ENCODE measurements at regions of chr12 and their contacts with region 1.

Region 1: DNA sequence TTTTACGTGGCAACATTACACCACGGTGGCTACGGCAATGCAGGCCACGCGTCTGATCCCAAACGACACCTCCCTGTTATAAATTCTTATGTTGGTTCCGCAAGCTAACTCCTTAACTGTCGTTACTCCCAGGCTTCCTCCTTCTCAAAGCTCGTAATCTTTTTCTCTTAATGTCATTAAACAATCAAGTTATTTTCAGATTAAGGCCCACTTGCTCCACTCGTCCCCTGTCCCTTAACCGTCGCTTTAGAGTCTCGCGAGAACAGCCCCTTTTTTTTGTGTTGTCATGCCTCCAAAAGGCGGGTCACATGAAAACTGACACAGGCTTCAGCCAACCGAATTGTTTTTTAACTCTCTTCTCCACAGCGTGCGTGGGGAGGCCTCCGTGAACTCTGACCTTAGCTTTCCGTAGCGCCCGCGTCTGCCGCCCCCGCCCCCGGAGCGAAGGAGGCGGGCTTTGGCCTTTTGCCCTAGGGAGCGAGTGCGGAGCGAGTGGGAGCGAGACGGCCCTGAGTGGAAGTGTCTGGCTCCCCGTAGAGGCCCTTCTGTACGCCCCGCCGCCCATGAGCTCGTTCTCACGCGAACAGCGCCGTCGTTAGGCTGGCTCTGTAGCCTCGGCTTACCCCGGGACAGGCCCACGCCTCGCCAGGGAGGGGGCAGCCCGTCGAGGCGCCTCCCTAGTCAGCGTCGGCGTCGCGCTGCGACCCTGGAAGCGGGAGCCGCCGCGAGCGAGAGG is at the start of gene CAND1:
- DNase-seq: peak; percentile 95
- ATAC-seq: peak; percentile 79
- H3K4me3 Mint-ChIP-seq: peak within 1 kb of the TSS; percentile 92
- H3K27ac Mint-ChIP-seq: peak within 1 kb of the TSS; percentile 99
- H3K4me1 Mint-ChIP-seq: peaks cover 44% of the 10 kb centered on the region
- H3K27me3 Mint-ChIP-seq: no peaks in the 10 kb centered on the region
- CTCF ChIP-seq: no peak
- total RNA-seq, gene CAND1: 123 and 125 TPM in 2 replicates

Region 2: GRCh38 chr12:66130277-66131066 is 1138.6 kb before region 1 on chr12 and contains the start of gene LLPH:
- CTCF ChIA-PET with region 1: no interaction called
- POLR2A ChIA-PET with region 1: interaction called, 9 read pairs
- intact Hi-C with region 1: loop called (anchors 2 kb)
- DNase-seq: peak; percentile 78
- ATAC-seq: peak; percentile 94
- H3K4me3 Mint-ChIP-seq: peak within 1 kb of the TSS; percentile 99
- H3K27ac Mint-ChIP-seq: peak within 1 kb of the TSS; percentile 96
- H3K4me1 Mint-ChIP-seq: peaks cover 43% of the 10 kb centered on the region
- H3K27me3 Mint-ChIP-seq: no peaks in the 10 kb centered on the region
- CTCF ChIP-seq: no peak
- total RNA-seq, gene LLPH: 29.5 and 35.5 TPM in 2 replicates

Region 3: DNA sequence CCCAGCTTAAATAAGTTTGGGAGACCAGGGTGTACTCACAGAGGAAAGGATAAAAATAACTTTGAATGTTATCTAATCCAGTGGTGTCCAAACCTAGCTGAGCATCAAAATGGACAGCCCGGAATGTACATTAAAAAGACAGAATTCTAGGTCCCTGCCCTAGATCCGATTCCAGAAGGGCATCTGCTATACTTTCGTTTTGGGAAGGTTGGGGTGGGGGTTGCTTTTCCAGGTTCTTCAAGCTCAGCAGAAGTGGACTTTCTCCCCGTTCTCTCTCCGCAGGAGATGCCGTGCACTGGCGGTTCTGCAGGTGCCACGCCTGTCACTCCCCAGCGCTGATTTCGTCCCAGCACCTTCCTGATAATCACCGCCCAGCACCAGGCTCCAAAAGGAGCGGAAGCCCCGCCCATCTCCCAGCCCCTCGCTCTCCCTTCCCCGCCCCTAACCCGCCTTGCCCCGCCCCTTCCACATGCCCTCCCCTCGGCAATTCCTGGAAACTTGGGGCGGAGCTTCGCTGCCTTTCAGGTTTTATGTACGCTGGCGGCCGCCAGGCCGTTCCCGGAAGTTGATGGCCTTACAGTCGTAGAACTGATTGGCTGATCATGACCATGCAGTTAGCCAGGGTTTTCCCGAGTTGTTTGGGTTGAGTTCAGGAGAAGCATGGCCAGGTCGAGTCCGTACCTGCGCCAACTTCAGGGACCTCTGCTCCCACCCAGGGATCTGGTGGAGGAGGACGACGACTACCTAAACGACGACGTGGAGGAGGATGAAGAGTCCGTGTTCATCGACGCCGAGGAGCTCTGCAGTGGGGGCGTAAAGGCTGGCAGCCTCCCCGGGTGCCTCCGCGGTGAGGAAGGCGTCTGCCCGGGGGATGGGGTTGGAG is 966.9 kb before region 1 on chr12 and contains the start of gene HELB:
- CTCF ChIA-PET with region 1: no interaction called
- POLR2A ChIA-PET with region 1: interaction called, 7 read pairs
- intact Hi-C with region 1: loop called (anchors 1 kb)
- DNase-seq: peak; percentile 80
- ATAC-seq: peak; percentile 95
- H3K4me3 Mint-ChIP-seq: peak within 1 kb of the TSS; percentile 99
- H3K27ac Mint-ChIP-seq: peak within 1 kb of the TSS; percentile 86
- H3K4me1 Mint-ChIP-seq: peaks cover 41% of the 10 kb centered on the region
- H3K27me3 Mint-ChIP-seq: peaks cover 1% of the 10 kb centered on the region
- CTCF ChIP-seq: no peak
- total RNA-seq, gene HELB: 4.7 and 7.2 TPM in 2 replicates

Region 4: DNA sequence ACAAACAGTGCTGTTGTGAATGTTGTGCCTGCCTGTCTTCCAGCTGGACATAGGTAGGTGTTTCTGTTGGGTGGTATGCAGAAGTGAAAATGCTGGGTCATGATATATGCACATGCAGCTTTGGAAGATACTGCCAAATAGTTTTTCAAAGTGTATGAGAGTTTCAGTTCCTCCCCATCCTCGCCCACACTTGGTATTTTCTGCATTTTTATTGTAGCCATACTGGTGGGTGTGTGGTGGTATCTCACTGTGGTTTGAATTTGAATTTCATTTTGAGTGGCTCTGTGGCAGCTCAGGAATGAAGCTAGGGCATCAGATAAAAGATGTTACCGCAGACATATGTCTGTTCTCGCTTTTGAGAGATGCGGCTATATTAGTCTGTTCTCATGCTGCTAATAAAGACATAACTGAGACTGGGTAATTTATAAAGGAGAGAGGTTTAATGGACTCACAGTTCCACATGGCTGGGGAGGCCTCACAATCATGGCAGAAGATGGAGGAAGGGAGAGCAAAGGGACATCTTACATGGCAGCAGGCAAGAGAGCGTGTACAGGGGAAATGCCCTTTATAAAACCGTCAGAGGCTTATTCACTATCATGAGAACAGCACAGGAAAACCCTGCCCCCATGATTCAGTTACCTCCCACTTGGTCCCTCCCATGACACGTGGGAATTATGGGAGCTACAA is 183.2 kb after region 1 on chr12:
- CTCF ChIA-PET with region 1: interaction called, 3 read pairs
- POLR2A ChIA-PET with region 1: interaction called, 12 read pairs
- intact Hi-C with region 1: loop called (anchors 1 kb)
- DNase-seq: no peak
- ATAC-seq: peak; percentile 60
- H3K4me3 Mint-ChIP-seq: peak overlapping the region; percentile 17
- H3K27ac Mint-ChIP-seq: peak overlapping the region; percentile 54
- H3K4me1 Mint-ChIP-seq: peaks cover 40% of the 10 kb centered on the region
- H3K27me3 Mint-ChIP-seq: peaks cover 12% of the 10 kb centered on the region
- CTCF ChIP-seq: no peak

Region 5: GRCh38 chr12:67698672-67699581 is 429.9 kb after region 1 on chr12:
- CTCF ChIA-PET with region 1: no interaction called
- POLR2A ChIA-PET with region 1: interaction called, 4 read pairs
- intact Hi-C with region 1: loop called (anchors 1 kb)
- DNase-seq: no peak
- ATAC-seq: peak; percentile 87
- H3K4me3 Mint-ChIP-seq: peak overlapping the region; percentile 74
- H3K27ac Mint-ChIP-seq: peak overlapping the region; percentile 86
- H3K4me1 Mint-ChIP-seq: peaks cover 43% of the 10 kb centered on the region
- H3K27me3 Mint-ChIP-seq: peaks cover 4% of the 10 kb centered on the region
- CTCF ChIP-seq: no peak

Region 6: DNA sequence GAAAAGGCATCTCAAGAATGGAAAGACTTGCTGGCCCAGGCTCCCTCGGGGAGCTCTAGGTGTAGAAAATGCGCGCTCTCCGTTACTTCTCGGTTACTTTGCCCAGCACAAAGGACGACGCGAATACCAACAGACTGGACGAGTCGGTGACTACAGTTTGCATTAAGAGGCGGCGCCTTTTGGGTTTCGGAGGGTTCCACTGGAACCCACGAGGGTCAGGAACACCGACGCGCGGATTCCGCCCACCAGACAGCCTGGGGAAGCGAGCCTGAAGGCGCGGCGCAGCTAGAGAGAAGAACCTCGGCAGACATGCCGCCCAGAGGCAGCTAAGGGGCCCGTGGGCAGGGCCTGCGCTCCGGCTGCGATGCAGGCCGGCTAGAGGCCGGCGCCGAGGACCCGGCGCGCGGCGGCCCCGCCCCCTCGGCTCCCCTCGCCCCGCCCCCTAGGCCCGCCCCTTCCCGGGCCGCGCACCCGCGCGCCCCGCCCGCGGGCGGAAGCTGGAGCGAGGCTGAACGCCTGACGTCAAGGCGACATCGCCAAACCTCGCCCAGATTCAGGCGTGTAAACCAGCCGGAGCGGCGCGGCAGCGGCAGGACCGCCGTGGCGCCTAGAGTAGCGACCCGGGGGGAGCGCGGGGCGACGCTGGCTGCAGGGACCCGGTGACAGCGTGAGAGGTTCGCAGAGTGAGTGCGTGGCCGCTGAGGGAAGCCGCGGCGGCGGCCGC is 1341.5 kb after region 1 on chr12 and contains the start of gene RAP1B:
- CTCF ChIA-PET with region 1: no interaction called
- POLR2A ChIA-PET with region 1: interaction called, 4 read pairs
- intact Hi-C with region 1: loop called (anchors 1 kb)
- DNase-seq: peak; percentile 82
- ATAC-seq: peak; percentile 82
- H3K4me3 Mint-ChIP-seq: peak within 1 kb of the TSS; percentile 95
- H3K27ac Mint-ChIP-seq: peak within 1 kb of the TSS; percentile 99
- H3K4me1 Mint-ChIP-seq: peaks cover 48% of the 10 kb centered on the region
- H3K27me3 Mint-ChIP-seq: no peaks in the 10 kb centered on the region
- CTCF ChIP-seq: no peak
- total RNA-seq, gene RAP1B: 136 and 142 TPM in 2 replicates